ENCODE measurements at regions of chr4 and their contacts with region 1.

Region 1: DNA sequence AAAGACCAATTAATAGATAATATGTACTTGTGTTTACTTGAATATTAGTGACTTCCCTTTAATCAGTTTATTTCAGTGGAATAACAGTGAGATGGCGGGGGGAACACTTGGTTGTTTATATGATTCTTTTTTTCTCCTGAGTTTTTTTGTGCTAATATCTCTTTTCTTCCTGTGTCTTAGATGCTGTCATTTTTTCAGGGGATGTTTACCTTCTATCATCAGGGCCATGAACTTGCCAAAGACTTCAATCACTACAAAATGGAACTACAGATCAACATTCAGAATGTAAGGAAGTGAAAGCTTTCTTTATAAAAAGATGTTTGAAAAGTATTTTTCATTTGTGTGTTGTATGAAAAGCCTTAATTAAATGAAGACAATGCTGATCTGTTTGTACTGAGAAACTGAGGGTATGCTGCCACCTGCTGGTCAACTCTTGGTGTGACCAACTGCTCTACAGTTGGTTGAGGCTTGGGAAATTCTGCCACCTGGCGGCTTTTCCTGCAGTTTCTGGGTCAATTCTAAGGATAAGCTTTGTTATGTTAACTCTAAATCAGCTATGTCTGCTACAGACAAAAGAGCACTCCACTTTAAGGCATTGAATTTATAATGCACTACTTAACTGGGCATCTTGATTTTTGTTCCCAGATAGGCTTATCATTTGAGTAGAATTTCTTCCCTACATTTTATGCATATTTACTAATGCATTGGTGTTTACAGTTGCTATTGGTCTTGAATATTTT is 134.8 kb downstream of the ARHGAP10 start:
- DNase-seq: peak; percentile 83 to 89 (median 85)
- H3K4me3 ChIP-seq: no peak overlapping the region
- H3K4me3 Mint-ChIP-seq: no peak overlapping the region
- H3K27ac ChIP-seq: no peak overlapping the region
- H3K27ac Mint-ChIP-seq: peak overlapping the region in 1 of 7 donors; percentile 43
- H3K4me1 ChIP-seq: no peaks in the 10 kb centered on the region
- H3K4me1 Mint-ChIP-seq: peaks cover 0 to 2% (median 0%) of the 10 kb centered on the region in 4 donors
- H3K27me3 ChIP-seq: no peaks in the 10 kb centered on the region
- H3K27me3 Mint-ChIP-seq: no peaks in the 10 kb centered on the region

Region 2: GRCh38 chr4:147351083-147351787 is 515.5 kb before region 1 on chr4:
- CTCF ChIA-PET with region 1: no interaction called
- POLR2A ChIA-PET with region 1: no interaction called
- intact Hi-C with region 1: no loop called
- DNase-seq: no peak
- H3K4me3 ChIP-seq: no peak overlapping the region
- H3K4me3 Mint-ChIP-seq: no peak overlapping the region
- H3K27ac ChIP-seq: no peak overlapping the region
- H3K27ac Mint-ChIP-seq: no peak overlapping the region
- H3K4me1 ChIP-seq: no peaks in the 10 kb centered on the region
- H3K4me1 Mint-ChIP-seq: no peaks in the 10 kb centered on the region
- H3K27me3 ChIP-seq: no peaks in the 10 kb centered on the region
- H3K27me3 Mint-ChIP-seq: no peaks in the 10 kb centered on the region

Region 3: GRCh38 chr4:147518846-147519767 is 347.6 kb before region 1 on chr4:
- CTCF ChIA-PET with region 1: interaction called, 47 read pairs
- POLR2A ChIA-PET with region 1: no interaction called
- intact Hi-C with region 1: no loop called
- DNase-seq: peak; percentile 32 to 47 (median 34)
- H3K4me3 ChIP-seq: no peak overlapping the region
- H3K4me3 Mint-ChIP-seq: no peak overlapping the region
- H3K27ac ChIP-seq: no peak overlapping the region
- H3K27ac Mint-ChIP-seq: no peak overlapping the region
- H3K4me1 ChIP-seq: no peaks in the 10 kb centered on the region
- H3K4me1 Mint-ChIP-seq: peaks cover 0 to 2% (median under 1%) of the 10 kb centered on the region in 4 donors
- H3K27me3 ChIP-seq: no peaks in the 10 kb centered on the region
- H3K27me3 Mint-ChIP-seq: peaks cover 2 to 8% of the 10 kb centered on the region in 2 donors

Region 4: DNA sequence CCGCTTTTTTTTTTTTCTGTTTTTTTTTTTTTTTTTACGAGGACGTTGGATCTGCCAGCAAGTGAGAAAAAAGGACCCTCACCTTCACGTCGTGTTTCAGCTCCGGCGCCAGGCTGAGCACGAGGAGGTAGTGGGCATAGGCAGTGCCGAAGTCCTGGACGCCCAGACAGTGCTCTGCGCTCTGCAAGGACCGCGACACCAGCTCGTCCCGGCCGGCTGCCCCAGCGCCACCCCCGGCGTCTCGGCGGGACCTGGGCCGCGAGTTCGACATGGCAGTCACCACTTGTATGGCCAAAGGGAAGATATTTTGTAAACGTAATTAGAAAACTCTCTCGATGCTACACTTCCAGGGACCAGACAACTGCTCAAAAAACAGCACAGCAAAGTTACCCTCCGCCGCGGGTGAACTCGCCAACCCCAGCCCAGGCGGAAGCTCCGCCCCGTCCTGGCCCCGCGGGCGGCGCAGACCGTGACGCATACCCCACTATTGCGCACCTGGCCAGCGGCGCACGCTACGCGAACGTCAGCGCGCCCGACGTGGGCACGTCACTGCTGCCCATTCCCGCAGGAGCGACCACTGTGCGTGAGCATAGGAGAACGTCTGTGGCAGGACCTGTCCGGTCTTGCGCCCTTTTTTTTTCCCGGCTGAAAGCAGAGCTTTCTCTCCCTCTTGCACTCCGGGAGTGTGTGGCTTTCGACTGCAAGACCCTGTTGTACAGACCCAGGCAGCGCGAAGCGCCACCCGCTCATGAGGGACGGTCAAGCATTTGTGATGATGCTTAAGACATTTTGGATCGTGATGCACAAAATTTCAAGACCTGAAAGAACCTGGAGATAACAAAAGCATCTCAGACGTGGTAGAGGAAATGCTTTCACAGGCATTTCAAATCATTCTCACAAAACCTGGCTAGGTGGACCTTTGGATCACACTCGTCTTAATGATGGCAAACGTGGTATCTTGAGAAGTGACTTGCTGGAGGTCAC is 182.7 kb before region 1 on chr4 and contains the start of gene PRMT9:
- CTCF ChIA-PET with region 1: interaction called, 29 read pairs
- POLR2A ChIA-PET with region 1: no interaction called
- intact Hi-C with region 1: no loop called
- DNase-seq: peak; percentile 82 to 89 (median 85)
- H3K4me3 ChIP-seq: peak within 1 kb of the TSS; percentile 75 to 96
- H3K4me3 Mint-ChIP-seq: peak within 1 kb of the TSS; percentile 92 to 99 (median 96)
- H3K27ac ChIP-seq: peak within 1 kb of the TSS; percentile 89
- H3K27ac Mint-ChIP-seq: peak within 1 kb of the TSS; percentile 96 to 99 (median 98)
- H3K4me1 ChIP-seq: peaks cover 15% of the 10 kb centered on the region
- H3K4me1 Mint-ChIP-seq: peaks cover 25 to 42% (median 33%) of the 10 kb centered on the region in 4 donors
- H3K27me3 ChIP-seq: no peaks in the 10 kb centered on the region
- H3K27me3 Mint-ChIP-seq: peaks cover 3% of the 10 kb centered on the region in 2 donors
- total RNA-seq, gene PRMT9: 12.1 to 12.6 TPM

Region 5: DNA sequence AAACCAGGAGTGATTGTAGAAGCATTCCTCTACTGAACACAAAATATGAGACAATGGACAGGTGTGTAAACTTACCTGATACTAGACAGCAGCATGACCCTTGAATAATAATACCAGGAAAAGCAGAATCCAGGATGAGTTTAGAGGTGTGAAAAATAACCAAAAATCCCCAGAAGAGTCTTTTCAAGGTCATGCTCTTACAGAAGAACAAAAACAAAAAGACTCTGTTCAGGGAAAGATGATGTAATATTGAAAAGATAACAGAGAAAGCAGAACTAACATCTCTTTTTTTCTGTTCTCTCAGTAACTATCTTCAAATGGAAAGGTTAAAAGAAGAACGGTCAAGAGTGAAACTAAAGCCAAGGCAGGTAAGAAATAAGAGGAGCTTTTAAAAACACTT is 148.8 kb before region 1 on chr4:
- CTCF ChIA-PET with region 1: interaction called, 261 read pairs
- POLR2A ChIA-PET with region 1: no interaction called
- intact Hi-C with region 1: no loop called
- DNase-seq: no peak
- H3K4me3 ChIP-seq: no peak overlapping the region
- H3K4me3 Mint-ChIP-seq: no peak overlapping the region
- H3K27ac ChIP-seq: no peak overlapping the region
- H3K27ac Mint-ChIP-seq: no peak overlapping the region
- H3K4me1 ChIP-seq: no peaks in the 10 kb centered on the region
- H3K4me1 Mint-ChIP-seq: no peaks in the 10 kb centered on the region
- H3K27me3 ChIP-seq: no peaks in the 10 kb centered on the region
- H3K27me3 Mint-ChIP-seq: peaks cover 1 to 5% of the 10 kb centered on the region in 2 donors

Region 6: GRCh38 chr4:147793569-147794313 is 73.0 kb before region 1 on chr4:
- CTCF ChIA-PET with region 1: interaction called, 32 read pairs
- POLR2A ChIA-PET with region 1: no interaction called
- intact Hi-C with region 1: no loop called
- DNase-seq: no peak
- H3K4me3 ChIP-seq: no peak overlapping the region
- H3K4me3 Mint-ChIP-seq: peak overlapping the region; percentile 32 to 89 (median 68)
- H3K27ac ChIP-seq: no peak overlapping the region
- H3K27ac Mint-ChIP-seq: peak overlapping the region; percentile 29 to 87 (median 75)
- H3K4me1 ChIP-seq: peaks cover 27% of the 10 kb centered on the region
- H3K4me1 Mint-ChIP-seq: peaks cover 31 to 42% (median 36%) of the 10 kb centered on the region in 4 donors
- H3K27me3 ChIP-seq: no peaks in the 10 kb centered on the region
- H3K27me3 Mint-ChIP-seq: no peaks in the 10 kb centered on the region

Region 7: DNA sequence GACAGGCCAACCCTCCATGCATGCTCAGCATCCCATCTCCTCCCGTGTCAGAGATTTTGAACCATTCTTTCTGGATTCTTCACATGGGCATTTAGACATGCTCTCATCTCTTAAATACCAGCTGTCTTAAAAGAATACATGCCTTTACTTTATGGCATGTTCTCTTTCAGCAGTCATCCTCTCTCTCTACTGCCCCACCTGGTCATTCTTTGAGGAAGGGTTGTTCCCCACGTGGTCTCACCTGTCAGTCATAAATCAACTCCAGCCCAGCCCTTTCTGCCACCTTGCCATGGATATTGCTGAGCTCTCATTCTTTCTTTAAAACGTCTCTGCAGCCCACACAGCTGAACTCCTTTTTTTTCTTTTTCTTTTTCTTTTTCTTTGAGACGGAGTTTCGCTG is 23.5 kb before region 1 on chr4:
- CTCF ChIA-PET with region 1: interaction called, 43 read pairs
- POLR2A ChIA-PET with region 1: no interaction called
- intact Hi-C with region 1: no loop called
- DNase-seq: peak in 1 of 5 donors; percentile 19
- H3K4me3 ChIP-seq: no peak overlapping the region
- H3K4me3 Mint-ChIP-seq: no peak overlapping the region
- H3K27ac ChIP-seq: no peak overlapping the region
- H3K27ac Mint-ChIP-seq: no peak overlapping the region
- H3K4me1 ChIP-seq: peaks cover 13% of the 10 kb centered on the region
- H3K4me1 Mint-ChIP-seq: peaks cover 0 to 4% (median 2%) of the 10 kb centered on the region in 4 donors
- H3K27me3 ChIP-seq: no peaks in the 10 kb centered on the region
- H3K27me3 Mint-ChIP-seq: no peaks in the 10 kb centered on the region

Region 8: DNA sequence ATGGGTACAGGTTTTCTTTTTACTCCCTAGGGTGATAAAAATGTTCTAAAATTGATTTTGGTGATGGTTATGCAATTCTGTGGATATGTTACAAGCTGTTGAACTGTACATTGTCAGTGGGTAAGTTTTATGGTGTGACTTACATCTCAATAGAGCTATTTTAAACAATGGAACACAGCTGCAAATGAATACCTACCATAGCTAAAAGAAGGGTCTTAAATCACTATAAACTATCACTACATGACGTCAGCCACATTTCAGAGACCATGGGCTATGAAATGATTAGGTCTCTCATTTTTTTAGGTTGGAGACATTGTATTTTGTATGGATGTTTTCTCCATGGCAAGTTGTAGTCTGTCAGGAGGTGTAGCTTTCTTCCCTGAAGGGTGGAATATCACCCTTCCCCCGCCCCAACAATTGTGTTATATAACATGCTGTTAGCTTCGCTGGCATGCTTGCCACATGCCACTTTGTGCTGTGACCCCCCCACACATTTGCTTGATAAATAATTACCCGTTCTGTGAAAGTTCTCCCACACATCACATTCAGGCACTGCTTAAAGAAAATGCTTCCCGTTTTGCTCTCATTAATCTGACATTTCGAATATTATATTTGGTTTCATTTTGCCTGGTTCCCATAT is 24.9 kb after region 1 on chr4:
- CTCF ChIA-PET with region 1: interaction called, 36 read pairs
- POLR2A ChIA-PET with region 1: no interaction called
- intact Hi-C with region 1: no loop called
- DNase-seq: no peak
- H3K4me3 ChIP-seq: no peak overlapping the region
- H3K4me3 Mint-ChIP-seq: no peak overlapping the region
- H3K27ac ChIP-seq: no peak overlapping the region
- H3K27ac Mint-ChIP-seq: no peak overlapping the region
- H3K4me1 ChIP-seq: no peaks in the 10 kb centered on the region
- H3K4me1 Mint-ChIP-seq: peaks cover 0 to 2% (median 0%) of the 10 kb centered on the region in 4 donors
- H3K27me3 ChIP-seq: no peaks in the 10 kb centered on the region
- H3K27me3 Mint-ChIP-seq: no peaks in the 10 kb centered on the region

Measured in CD4-positive, alpha-beta memory T cell (primary cell).